Mammary epithelial cell (primary cell): ENCODE measurements at regions of chr14 and their contacts with region 1.

Region 1: GRCh38 chr14:93234798-93235197 is 27.7 kb downstream of the UBR7 start:
- DNase-seq: peak; percentile 79
- H3K4me3 ChIP-seq: no peak overlapping the region
- H3K27ac ChIP-seq: no peak overlapping the region
- H3K4me1 ChIP-seq: peaks cover 4% of the 10 kb centered on the region
- H3K27me3 ChIP-seq: no peaks in the 10 kb centered on the region
- CTCF ChIP-seq: no peak

Region 2: DNA sequence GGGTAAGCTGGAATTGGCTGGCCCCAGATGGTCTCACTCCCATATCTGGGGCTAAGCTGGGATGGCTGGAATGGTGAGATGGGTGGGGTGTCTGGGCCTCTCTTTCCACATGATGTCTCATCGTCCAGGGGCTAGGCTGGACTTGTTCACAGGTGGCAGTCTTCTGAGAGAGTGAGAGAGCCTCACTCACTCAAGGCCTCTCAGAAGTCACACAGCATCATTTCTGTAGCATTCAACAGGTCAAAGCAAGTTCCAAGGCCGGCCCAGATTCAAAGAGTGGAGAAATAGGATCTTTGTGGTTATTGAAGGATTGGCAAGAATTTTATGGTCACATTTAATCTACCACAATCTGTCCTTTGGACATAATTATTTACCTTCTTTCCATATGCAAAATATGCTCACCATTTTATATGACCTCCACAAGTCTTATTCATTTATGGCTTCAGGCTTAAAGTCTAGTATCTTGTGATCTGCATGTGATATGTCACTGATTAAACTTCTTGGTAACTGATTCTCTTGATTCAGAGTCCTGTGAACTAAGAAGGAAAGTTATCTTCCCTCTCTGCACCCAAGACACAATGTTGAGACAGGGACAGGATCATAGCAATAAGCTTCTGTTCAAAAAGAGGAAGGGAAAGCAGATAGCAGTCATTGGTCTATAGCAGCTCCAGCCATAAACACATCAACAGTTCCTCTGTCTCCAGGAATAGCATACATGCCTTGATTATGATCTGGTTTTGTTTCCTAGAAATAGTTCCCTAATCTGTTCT is 298.9 kb after region 1 on chr14:
- CTCF ChIA-PET with region 1: no interaction called
- dilution Hi-C with region 1: no loop called
- in situ Hi-C with region 1: no loop called
- intact Hi-C with region 1: loop called (anchors 1 kb)
- DNase-seq: peak; percentile 99
- H3K4me3 ChIP-seq: no peak overlapping the region
- H3K27ac ChIP-seq: peak overlapping the region; percentile 61
- H3K4me1 ChIP-seq: peaks cover 38% of the 10 kb centered on the region
- H3K27me3 ChIP-seq: no peaks in the 10 kb centered on the region
- CTCF ChIP-seq: no peak

Region 3: DNA sequence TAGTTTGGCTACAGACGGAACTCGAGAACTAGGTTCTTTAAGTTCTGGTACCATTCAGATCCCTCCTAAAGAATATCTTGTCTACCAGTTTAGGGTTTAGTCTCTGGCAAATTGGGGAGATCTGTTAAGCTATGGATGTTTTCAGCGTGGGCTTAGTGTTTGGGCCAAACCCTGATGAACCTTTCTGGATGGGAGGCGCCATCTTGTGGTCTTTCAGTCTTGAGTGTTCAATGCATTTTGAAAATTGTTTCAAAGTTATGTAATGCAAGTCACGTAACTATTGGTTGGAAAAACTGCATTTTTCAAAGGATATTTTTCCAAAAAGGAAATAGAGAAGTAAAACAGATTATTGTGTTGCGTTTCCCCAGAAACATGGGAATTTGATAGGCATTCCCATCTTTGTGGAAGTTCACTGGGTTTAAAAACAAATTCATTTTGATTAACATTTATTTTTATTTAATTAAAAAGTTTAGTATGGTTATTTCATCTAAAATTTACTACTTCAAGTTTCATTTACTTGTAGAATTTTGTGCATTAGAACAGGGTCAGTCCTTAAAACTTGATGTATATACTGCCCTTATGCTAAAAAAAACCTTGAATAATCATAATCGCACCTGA is 384.5 kb after region 1 on chr14:
- CTCF ChIA-PET with region 1: no interaction called
- dilution Hi-C with region 1: no loop called
- in situ Hi-C with region 1: no loop called
- intact Hi-C with region 1: loop called (anchors 1 kb)
- DNase-seq: peak; percentile 14
- H3K4me3 ChIP-seq: no peak overlapping the region
- H3K27ac ChIP-seq: no peak overlapping the region
- H3K4me1 ChIP-seq: no peaks in the 10 kb centered on the region
- H3K27me3 ChIP-seq: no peaks in the 10 kb centered on the region
- CTCF ChIP-seq: peak; percentile 58 to 71